Tibial artery (tissue), 4 donors: ENCODE measurements at regions of chr21 and their contacts with region 1.

Region 1: GRCh38 chr21:43758111-43758641 is 17.9 kb downstream of the CSTB start:
- DNase-seq: peak; percentile 68 to 86
- H3K4me3 ChIP-seq: peak overlapping the region; percentile 32 to 40
- H3K27ac ChIP-seq: peak overlapping the region; percentile 68 to 69
- H3K4me1 ChIP-seq: peaks cover 0 to 25% (median 18%) of the 10 kb centered on the region in 4 donors
- H3K27me3 ChIP-seq: no peaks in the 10 kb centered on the region
- CTCF ChIP-seq: no peak

Region 2: GRCh38 chr21:43684424-43684823 is 73.8 kb before region 1 on chr21:
- intact Hi-C with region 1: loop called (anchors 5 kb)
- DNase-seq: no peak
- H3K4me3 ChIP-seq: no peak overlapping the region
- H3K27ac ChIP-seq: no peak overlapping the region
- H3K4me1 ChIP-seq: no peaks in the 10 kb centered on the region
- H3K27me3 ChIP-seq: no peaks in the 10 kb centered on the region
- CTCF ChIP-seq: no peak